ENCODE measurements at regions of chr7 and their contacts with region 1.

Region 1: DNA sequence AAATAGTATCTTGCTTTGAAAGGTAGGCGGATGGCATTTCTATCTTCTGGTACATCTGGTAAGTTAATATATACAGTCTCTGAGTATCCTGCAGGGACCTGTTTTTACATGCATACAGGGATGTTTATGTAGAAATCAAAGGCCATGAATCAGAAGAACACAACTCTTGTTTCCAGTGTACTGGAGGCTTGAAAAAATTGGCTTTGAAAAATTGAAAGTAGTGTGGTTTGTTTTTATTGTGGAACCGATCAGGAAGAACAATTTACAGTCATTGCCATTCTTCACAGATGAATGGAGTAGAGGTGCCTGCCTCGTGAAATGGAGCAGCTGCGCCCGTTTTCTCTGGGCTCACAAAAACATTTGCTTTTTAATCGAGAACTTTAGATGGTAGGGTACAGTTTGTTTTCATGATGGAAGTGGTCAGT is 54.0 kb upstream of the RPA3 start:
- DNase-seq: peak; percentile 65
- H3K4me3 Mint-ChIP-seq: peak overlapping the region; percentile 49
- H3K27ac Mint-ChIP-seq: peak overlapping the region; percentile 73
- H3K4me1 Mint-ChIP-seq: peaks cover 12% of the 10 kb centered on the region
- H3K27me3 Mint-ChIP-seq: peaks cover 2% of the 10 kb centered on the region

Region 2: GRCh38 chr7:7566651-7567611 is 205.5 kb before region 1 on chr7 and contains the start of gene MIOS:
- intact Hi-C with region 1: loop called (anchors 10 kb)
- DNase-seq: peak; percentile 96
- H3K4me3 Mint-ChIP-seq: peak within 1 kb of the TSS; percentile 84
- H3K27ac Mint-ChIP-seq: peak within 1 kb of the TSS; percentile 79
- H3K4me1 Mint-ChIP-seq: peaks cover 23% of the 10 kb centered on the region
- H3K27me3 Mint-ChIP-seq: no peaks in the 10 kb centered on the region
- total RNA-seq, gene MIOS: 33.3 and 34.7 TPM in 2 replicates

Region 3: GRCh38 chr7:7719236-7719635 is 53.2 kb before region 1 on chr7:
- intact Hi-C with region 1: loop called (anchors 2 kb)
- DNase-seq: peak; percentile 84
- H3K4me3 Mint-ChIP-seq: peak overlapping the region; percentile 47
- H3K27ac Mint-ChIP-seq: peak overlapping the region; percentile 73
- H3K4me1 Mint-ChIP-seq: peaks cover 17% of the 10 kb centered on the region
- H3K27me3 Mint-ChIP-seq: no peaks in the 10 kb centered on the region

Region 4: DNA sequence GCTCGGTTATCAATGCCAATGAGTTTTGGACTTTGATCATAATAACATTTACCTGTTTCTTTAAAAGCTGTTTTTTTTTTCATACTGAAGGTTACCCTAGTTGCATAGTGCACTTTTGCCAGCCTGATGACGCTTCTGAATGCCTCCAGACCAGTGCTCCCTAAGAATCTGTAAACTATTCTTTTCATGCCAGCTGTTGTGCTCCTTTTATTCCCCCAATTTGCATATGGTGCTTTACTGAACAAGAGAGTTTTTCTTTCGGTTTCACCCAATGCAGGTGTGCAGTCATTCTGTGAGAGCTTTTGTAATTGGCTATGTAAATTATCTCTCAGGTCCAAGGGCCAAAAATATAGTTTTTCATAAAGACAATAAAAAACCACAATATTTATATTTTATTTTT is 148.1 kb after region 1 on chr7:
- intact Hi-C with region 1: loop called (anchors 2 kb)
- DNase-seq: peak; percentile 73
- H3K4me3 Mint-ChIP-seq: peak overlapping the region; percentile 0
- H3K27ac Mint-ChIP-seq: no peak overlapping the region
- H3K4me1 Mint-ChIP-seq: peaks cover 30% of the 10 kb centered on the region
- H3K27me3 Mint-ChIP-seq: no peaks in the 10 kb centered on the region

Measured in activated CD4-positive, alpha-beta T cell treated with anti-CD3 and anti-CD28 coated beads, Interleukin-2, amount 10 ng/mL, durations not matched to agents 24 days and 14 days (primary cell).